Activated CD4-positive, alpha-beta T cell treated with anti-CD3 and anti-CD28 coated beads for 36 hours (primary cell): ENCODE measurements at regions of chr2 and their contacts with region 1.

Region 1: DNA sequence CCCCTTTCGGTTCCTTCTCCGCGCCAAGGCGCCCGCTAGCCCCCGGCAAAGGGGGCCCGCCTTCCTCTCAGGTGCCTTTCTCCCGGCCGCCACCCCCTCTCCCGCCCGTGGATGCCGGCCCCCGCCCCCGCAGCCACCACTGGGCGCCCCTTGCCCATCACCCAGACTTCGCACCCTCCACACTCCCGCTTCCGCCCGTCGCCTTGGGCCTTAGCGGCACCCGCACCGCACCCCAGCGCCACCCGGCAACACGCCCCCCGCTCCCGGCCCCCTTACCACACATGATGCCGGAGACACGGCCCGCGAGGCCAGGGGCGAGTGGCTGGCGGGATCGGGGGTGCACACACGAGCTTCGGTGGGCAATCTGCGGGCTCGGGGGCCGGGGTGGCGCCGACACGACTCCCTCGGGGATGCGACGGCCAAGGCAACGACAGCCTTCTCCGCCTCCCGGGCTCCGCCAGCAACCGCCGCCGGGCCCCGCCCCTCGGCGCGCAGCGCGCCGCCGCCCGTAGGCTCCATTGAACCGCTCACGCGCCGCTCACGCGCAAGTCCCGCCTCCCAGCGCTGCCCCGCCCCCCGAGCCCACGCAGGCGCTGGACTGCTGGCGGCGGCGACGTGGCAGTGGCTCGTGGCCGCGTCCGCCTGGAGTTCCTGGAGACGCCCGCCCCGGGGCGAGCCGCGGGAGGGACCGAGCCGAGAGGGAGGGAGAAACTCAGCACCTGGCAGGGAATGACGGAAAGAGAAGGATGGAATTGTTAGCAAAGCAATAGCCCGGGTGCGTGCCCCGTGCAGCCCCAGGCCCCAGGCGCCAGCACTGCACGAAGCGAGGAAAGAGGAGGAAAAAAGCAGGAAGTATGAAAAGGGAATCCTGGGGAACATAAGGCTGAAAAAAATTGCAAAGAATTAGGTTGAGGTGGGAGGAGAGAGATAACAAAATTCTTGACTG is at the start of gene GFPT1:
- DNase-seq: peak; percentile 96
- ATAC-seq: peak; percentile 96
- H3K4me3 Mint-ChIP-seq: peak within 1 kb of the TSS; percentile 81
- H3K27ac Mint-ChIP-seq: peak within 1 kb of the TSS; percentile 92
- H3K4me1 Mint-ChIP-seq: peaks cover 45% of the 10 kb centered on the region
- H3K27me3 Mint-ChIP-seq: no peaks in the 10 kb centered on the region
- total RNA-seq, gene GFPT1: 31.0 to 36.1 TPM

Region 2: DNA sequence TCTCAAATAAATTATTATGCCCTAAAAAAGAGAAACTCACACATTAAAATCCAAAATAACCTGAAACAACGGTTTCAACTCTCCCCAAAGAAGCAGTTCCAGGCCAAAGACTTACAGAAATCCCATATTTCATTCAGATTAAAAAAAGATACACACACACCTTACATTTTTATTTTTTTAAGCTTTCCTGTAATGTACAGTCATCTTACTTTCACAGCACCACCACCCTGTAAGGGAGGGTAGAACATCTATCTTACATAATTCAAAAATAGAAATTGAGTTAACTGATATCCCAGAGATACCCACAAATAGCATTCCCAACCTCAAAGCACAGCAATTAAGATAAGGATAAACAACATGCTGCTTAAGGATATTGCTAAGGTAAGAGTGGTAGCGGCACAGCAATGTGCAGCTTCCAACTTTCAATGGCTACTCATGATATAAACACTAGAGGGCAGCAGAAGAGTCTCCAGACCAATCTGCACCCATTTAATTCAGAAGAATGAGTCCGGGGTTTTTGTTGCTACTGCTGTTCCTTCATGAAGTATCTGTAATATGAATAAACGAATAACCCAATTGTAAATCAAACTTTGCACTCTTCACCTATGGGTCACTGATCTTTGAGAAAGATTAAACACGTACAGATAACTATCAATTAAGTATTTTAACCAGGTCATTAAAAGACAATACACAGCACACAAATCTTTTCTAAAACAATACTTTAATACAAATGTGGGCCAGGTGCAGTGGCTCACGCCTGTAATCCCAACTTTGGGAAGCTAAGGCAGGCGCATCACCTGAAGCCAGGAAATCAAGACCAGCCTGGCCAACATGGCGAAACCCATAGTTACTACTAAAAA is 11.3 kb before region 1 on chr2:
- CTCF ChIA-PET with region 1: interaction called, 19 read pairs
- POLR2A ChIA-PET with region 1: no interaction called
- intact Hi-C with region 1: no loop called
- DNase-seq: no peak
- ATAC-seq: peak; percentile 85
- H3K4me3 Mint-ChIP-seq: no peak overlapping the region
- H3K27ac Mint-ChIP-seq: peak overlapping the region; percentile 1
- H3K4me1 Mint-ChIP-seq: peaks cover 15% of the 10 kb centered on the region
- H3K27me3 Mint-ChIP-seq: no peaks in the 10 kb centered on the region

Region 3: DNA sequence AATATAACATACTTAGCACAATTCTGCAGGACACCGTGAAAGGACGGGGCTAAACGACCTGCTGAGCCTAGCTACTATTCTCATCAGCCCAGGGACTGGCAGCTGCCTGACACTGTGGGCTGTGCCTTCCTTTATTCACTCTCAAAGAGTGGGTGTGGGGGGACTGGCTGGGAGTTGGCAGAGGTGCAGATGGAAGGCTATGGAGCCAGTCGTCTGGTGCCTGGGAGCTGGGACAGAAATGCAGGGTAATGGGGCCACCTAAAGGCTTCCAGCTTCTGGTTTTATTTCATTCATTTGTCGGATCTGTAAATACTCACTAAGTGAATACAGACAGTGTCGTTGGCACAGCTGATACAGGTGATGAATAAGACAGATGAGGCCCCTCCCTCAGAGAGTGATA is 106.2 kb after region 1 on chr2:
- CTCF ChIA-PET with region 1: no interaction called
- POLR2A ChIA-PET with region 1: no interaction called
- intact Hi-C with region 1: no loop called
- DNase-seq: no peak
- ATAC-seq: no peak
- H3K4me3 Mint-ChIP-seq: no peak overlapping the region
- H3K27ac Mint-ChIP-seq: peak overlapping the region; percentile 33
- H3K4me1 Mint-ChIP-seq: peaks cover 25% of the 10 kb centered on the region
- H3K27me3 Mint-ChIP-seq: no peaks in the 10 kb centered on the region

Region 4: GRCh38 chr2:70258532-70258874 is 871.4 kb after region 1 on chr2:
- CTCF ChIA-PET with region 1: no interaction called
- POLR2A ChIA-PET with region 1: no interaction called
- intact Hi-C with region 1: loop called in 1 of 2 experiments (anchors 10 kb)
- DNase-seq: no peak
- ATAC-seq: no peak
- H3K4me3 Mint-ChIP-seq: peak overlapping the region; percentile 80
- H3K27ac Mint-ChIP-seq: no peak overlapping the region
- H3K4me1 Mint-ChIP-seq: peaks cover 31% of the 10 kb centered on the region
- H3K27me3 Mint-ChIP-seq: no peaks in the 10 kb centered on the region